ENCODE measurements at regions of chr20 and their contacts with region 1.

Region 1: DNA sequence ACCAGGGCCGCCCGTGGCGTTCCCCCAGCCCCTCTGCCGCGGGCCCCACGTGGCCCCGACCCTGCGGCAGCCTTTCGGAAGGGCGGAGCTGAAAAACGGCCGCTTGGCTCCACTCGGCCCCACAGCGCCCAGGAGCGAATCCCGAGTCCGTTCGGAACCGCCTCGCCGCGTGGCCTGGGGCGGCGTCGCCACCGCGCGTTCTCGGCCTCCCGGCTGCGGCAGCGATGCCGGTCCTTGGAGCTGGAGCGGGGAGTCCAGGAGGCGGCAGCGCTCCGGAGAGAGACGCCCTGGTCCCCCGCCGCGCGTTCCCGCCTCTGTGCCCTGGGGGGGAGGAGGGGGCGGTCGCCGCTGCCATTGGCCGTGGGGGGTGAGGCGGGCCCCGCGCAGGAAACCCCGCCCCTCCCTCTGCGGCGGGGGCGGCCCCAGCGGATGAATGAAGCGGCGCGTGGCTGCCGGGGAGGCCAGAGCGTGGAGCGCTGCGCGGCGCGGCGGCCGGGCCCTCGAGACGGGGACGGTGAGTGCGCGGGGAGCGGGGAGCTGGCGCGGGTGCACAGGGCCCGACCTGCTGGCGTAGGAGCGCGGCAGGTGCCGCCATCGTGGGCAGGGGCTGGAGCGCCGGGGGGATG is at the start of gene SLCO4A1:
- DNase-seq: peak; percentile 91
- ATAC-seq: peak; percentile 79
- total RNA-seq, gene SLCO4A1: 15.5 TPM

Region 2: DNA sequence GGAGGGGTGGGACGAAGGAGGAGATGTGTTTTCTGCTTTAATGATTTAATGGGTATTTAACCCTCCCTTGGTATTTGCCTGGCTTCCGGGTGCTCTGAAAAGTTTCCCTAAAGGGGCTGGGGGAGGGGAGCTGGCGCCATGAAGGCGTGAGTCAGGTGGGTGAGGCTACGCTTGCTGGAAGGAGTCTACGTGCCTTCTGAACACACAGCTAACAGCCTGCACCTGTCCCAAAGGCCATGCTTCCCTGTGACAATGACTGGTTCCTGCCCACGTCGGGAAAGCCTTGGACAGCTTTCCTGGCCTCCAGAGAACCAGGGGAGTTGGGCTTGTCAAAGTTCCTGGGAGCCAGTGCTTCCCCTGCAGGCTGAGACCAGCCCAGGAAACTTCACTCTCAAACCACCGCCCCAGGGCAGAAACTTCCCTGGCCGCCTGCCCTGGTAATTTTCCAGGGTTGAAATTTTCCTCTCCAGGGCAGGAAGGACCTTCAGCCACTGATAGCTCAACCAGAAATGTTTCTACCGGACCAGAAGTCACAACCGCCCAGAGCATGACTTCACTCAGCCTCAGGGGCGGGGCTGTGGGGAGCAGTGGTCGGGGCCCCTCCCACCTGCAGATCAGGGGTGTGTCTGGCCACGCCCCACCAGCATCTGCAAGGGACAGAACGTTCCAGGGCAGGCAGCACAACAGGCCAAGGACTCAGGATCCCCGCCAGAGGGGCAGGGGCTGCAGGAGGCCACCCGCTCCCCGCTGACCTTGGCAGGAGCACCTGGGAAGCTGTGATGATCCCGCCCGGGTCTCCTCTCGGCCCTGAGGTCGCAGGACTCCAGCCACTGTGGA is 18.4 kb before region 1 on chr20:
- intact Hi-C with region 1: loop called (anchors 2 kb)
- DNase-seq: peak; percentile 98
- ATAC-seq: peak; percentile 95